Upper lobe of right lung (tissue), 1 donor: ENCODE measurements at regions of chr22 and their contacts with region 1.

Region 1: GRCh38 chr22:37817705-37818408 is 5.3 kb upstream of the GALR3 start:
- DNase-seq: peak; percentile 89
- ATAC-seq: peak; percentile 95
- H3K4me3 ChIP-seq: peak overlapping the region; percentile 37
- H3K27ac ChIP-seq: no peak overlapping the region
- H3K4me1 ChIP-seq: peaks cover 19% of the 10 kb centered on the region
- H3K27me3 ChIP-seq: peaks cover 31% of the 10 kb centered on the region
- CTCF ChIP-seq: peak; percentile 96

Region 2: GRCh38 chr22:37501610-37502341 is 316.1 kb before region 1 on chr22:
- intact Hi-C with region 1: no loop called
- DNase-seq: peak; percentile 82
- ATAC-seq: peak; percentile 76
- H3K4me3 ChIP-seq: no peak overlapping the region
- H3K27ac ChIP-seq: peak overlapping the region; percentile 71
- H3K4me1 ChIP-seq: peaks cover 43% of the 10 kb centered on the region
- H3K27me3 ChIP-seq: no peaks in the 10 kb centered on the region
- CTCF ChIP-seq: no peak

Region 3: GRCh38 chr22:37862570-37863325 is 44.9 kb after region 1 on chr22:
- intact Hi-C with region 1: loop called (anchors 10 kb)
- DNase-seq: no peak
- ATAC-seq: no peak
- H3K4me3 ChIP-seq: no peak overlapping the region
- H3K27ac ChIP-seq: no peak overlapping the region
- H3K4me1 ChIP-seq: no peaks in the 10 kb centered on the region
- H3K27me3 ChIP-seq: no peaks in the 10 kb centered on the region
- CTCF ChIP-seq: no peak